PC-3 (cell line): ENCODE measurements at regions of chr14 and their contacts with region 1.

Region 1: DNA sequence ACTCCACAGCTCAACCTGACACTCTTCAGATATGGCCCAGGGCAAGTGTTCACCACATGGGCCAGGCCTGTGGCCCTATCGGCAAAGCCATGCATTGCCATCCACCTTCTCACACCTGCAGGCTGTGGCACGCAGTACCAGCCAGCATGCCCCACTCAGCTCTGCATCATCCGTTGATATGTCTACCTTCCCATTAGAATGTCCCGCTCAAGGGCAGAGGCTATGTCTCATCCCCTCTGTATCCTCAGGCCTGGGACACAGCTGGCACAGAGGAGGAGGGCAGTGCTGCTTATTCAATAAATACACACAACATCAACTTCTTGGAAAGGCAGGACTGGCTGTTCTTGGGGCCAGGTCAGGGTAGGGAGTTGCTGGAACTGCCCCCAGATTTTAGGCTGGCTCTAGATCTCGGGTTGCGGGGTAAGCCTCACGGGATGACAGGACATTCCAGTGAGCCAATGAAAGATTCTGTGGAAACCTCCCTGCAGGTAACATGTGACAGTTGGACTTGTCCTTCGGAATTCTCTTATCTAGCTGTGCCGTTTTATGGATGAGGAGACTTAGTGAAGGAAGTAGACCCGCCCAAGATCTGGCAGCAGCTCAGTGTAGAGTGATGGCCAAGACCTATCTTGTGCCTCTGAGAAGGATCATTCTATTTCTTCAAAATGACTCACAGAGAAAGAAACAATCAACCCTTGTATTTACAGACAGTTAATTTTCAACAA is 25.6 kb downstream of the SYNE3 start:
- DNase-seq: peak; percentile 40
- ATAC-seq: peak; percentile 79
- H3K4me3 ChIP-seq: no peak overlapping the region
- H3K27ac ChIP-seq: no peak overlapping the region
- H3K4me1 ChIP-seq: no peaks in the 10 kb centered on the region
- H3K27me3 ChIP-seq: no peaks in the 10 kb centered on the region
- CTCF ChIP-seq: no peak

Region 2: DNA sequence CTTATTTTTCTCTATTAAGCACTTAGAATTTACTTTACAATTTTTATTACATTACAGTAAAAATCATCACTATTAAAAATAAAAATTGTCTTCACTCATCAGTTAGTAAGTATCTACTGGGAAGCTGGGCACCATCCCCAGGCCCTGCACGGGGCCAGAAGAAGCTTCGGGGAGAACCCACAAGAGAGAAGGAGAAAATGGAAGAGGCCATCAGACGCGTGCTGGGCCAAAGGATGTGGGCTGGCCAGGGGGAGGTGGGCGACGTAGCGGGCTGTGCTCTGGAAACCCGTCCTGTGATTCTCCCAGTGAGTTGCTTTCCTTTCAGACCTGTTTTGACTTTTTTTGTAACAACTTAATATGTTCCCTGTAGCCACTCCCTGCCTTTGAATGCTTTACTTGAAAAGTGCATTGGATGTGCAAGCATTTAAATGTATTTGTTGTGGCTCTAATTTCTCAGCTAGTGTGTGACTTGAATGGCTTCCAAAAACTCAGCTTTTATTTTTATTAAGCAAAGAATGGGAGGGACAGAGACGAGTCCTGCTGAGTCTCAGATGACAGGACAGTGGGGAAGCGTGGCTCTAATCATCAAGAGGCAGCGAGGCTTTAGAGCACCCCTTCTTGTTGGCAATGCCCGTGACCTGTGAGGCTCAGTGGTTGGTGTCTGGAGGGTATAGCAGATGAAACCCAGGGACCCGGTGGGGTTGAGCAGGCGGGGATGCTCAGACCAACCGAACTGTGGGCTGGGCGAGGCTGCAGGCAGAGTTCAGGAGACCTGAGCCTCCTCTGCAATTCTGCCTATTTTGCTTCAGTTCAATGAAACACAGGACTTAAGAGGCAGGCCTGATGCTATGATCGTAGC is 13.2 kb before region 1 on chr14:
- CTCF ChIA-PET with region 1: no interaction called
- POLR2A ChIA-PET with region 1: no interaction called
- intact Hi-C with region 1: loop called (anchors 1 kb)
- DNase-seq: peak; percentile 11
- ATAC-seq: peak; percentile 50
- H3K4me3 ChIP-seq: no peak overlapping the region
- H3K27ac ChIP-seq: no peak overlapping the region
- H3K4me1 ChIP-seq: peaks cover 14% of the 10 kb centered on the region
- H3K27me3 ChIP-seq: no peaks in the 10 kb centered on the region
- CTCF ChIP-seq: no peak

Region 3: DNA sequence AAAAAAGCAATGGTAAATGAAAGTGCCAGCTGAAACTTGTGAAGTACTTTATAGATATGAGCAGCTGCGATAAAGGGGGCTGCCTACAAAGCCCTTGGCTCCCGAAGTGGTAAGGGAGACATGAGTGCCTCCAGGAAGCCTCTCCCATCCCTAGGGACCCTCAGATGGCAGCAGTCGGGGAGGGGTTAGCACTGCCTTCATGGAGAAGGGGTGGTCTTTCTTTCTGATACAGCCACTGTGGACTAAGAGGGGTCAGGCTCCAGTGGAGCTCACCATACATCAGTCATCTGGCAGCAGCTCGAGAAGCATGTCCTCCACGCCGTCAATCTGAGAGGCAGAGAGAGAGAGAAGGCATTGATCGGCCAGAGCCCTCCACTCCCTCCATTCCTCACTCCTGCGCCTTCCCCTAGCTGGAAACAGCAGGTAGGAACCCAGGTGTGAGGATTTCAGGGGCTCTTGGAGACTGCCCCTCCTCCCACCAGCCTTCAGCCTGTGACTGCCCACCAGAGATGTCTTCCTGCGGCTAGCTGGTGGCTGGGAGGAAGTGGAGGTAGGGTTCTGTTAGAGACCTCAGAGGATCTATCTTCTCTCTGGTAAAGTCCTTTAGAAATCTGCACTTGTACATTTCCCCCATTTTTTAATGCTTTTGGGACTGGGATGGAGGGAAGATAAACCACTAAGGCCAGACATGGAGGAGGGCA is 220.7 kb after region 1 on chr14:
- CTCF ChIA-PET with region 1: no interaction called
- POLR2A ChIA-PET with region 1: no interaction called
- intact Hi-C with region 1: no loop called
- DNase-seq: no peak
- ATAC-seq: no peak
- H3K4me3 ChIP-seq: no peak overlapping the region
- H3K27ac ChIP-seq: no peak overlapping the region
- H3K4me1 ChIP-seq: no peaks in the 10 kb centered on the region
- H3K27me3 ChIP-seq: peaks cover 55% of the 10 kb centered on the region
- CTCF ChIP-seq: no peak

Region 4: GRCh38 chr14:96614481-96614881 is 1123.6 kb after region 1 on chr14:
- CTCF ChIA-PET with region 1: no interaction called
- POLR2A ChIA-PET with region 1: no interaction called
- intact Hi-C with region 1: no loop called
- DNase-seq: no peak
- ATAC-seq: no peak
- H3K4me3 ChIP-seq: no peak overlapping the region
- H3K27ac ChIP-seq: no peak overlapping the region
- H3K4me1 ChIP-seq: no peaks in the 10 kb centered on the region
- H3K27me3 ChIP-seq: peaks cover 84% of the 10 kb centered on the region
- CTCF ChIP-seq: no peak